MCF 10A (cell line): ENCODE measurements at regions of chr6 and their contacts with region 1.

Region 1: DNA sequence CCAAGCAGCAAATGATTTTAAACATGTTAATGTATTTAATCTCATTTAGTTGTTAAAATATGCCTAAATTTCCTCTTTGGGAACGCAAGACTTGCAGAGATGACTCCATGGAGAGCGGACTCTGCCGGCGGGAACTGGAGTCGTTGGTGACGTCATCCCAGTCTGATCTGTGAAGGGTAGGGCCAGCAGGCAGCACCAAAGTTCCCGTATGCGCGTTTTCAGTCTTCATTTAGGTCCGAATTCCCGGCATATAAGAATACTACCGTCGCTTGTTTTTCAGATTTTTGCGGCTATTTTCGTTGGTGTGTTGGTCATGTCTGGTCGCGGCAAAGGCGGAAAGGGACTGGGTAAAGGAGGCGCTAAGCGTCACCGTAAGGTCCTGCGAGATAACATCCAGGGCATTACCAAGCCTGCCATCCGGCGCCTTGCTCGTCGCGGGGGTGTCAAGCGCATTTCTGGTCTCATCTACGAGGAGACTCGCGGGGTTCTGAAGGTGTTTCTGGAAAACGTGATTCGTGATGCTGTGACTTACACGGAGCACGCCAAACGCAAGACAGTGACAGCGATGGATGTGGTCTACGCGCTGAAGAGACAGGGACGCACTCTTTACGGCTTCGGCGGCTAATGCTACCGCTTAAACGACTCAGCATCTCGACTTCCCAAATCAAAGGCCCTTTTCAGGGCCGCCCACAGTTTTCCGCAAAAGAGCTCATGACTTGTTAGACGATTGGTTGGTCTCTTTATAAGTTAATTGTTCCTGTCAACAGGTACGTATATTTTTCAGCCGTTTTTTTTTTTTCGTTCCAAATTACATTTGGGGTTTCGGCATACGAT is 117.3 kb downstream of the HFE start:
- DNase-seq: peak; percentile 98
- H3K4me3 Mint-ChIP-seq: no peak overlapping the region
- H3K27ac Mint-ChIP-seq: no peak overlapping the region
- H3K4me1 Mint-ChIP-seq: peaks cover 3% of the 10 kb centered on the region
- H3K27me3 Mint-ChIP-seq: no peaks in the 10 kb centered on the region
- CTCF ChIP-seq: no peak

Region 2: GRCh38 chr6:26054857-26055669 is 149.5 kb before region 1 on chr6:
- CTCF ChIA-PET with region 1: no interaction called
- POLR2A ChIA-PET with region 1: interaction called, 70 read pairs
- intact Hi-C with region 1: loop called (anchors 5 kb)
- DNase-seq: peak; percentile 96
- H3K4me3 Mint-ChIP-seq: peak overlapping the region; percentile 74
- H3K27ac Mint-ChIP-seq: peak overlapping the region; percentile 92
- H3K4me1 Mint-ChIP-seq: no peaks in the 10 kb centered on the region
- H3K27me3 Mint-ChIP-seq: no peaks in the 10 kb centered on the region
- CTCF ChIP-seq: no peak

Region 3: DNA sequence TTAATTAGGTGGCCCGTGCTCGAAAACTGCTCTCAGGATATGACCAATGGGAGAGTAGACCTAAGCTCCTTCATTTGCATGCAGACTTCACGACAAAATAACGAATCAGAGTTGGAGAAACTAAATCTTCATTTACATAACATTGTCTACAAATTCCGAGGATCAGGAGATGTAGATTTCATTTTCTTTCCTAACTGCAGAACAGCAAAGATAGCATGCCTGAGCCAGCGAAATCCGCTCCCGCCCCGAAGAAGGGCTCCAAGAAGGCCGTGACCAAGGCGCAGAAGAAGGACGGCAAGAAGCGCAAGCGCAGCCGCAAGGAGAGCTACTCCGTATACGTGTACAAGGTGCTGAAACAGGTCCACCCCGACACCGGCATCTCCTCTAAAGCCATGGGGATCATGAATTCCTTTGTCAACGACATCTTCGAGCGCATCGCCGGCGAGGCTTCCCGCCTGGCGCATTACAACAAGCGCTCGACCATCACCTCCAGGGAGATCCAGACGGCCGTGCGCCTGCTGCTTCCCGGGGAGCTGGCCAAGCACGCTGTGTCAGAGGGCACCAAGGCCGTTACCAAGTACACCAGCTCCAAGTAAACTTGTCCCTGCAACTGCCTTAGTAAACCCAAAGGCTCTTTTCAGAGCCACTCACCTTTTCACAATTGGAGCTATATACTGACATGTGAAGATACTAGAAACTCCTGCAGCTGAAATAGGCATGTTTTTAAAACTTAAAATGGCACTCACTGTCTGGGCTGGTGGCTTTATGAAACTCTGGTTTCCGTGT is 20.8 kb before region 1 on chr6:
- CTCF ChIA-PET with region 1: no interaction called
- POLR2A ChIA-PET with region 1: interaction called, 372 read pairs
- intact Hi-C with region 1: no loop called
- DNase-seq: peak; percentile 56
- H3K4me3 Mint-ChIP-seq: peak overlapping the region; percentile 79
- H3K27ac Mint-ChIP-seq: peak overlapping the region; percentile 84
- H3K4me1 Mint-ChIP-seq: peaks cover 27% of the 10 kb centered on the region
- H3K27me3 Mint-ChIP-seq: no peaks in the 10 kb centered on the region
- CTCF ChIP-seq: no peak

Region 4: GRCh38 chr6:26249957-26250697 is 45.6 kb after region 1 on chr6:
- CTCF ChIA-PET with region 1: interaction called, 3 read pairs
- POLR2A ChIA-PET with region 1: interaction called, 3 read pairs
- intact Hi-C with region 1: loop called (anchors 1 kb)
- DNase-seq: peak; percentile 87
- H3K4me3 Mint-ChIP-seq: peak overlapping the region; percentile 94
- H3K27ac Mint-ChIP-seq: peak overlapping the region; percentile 63
- H3K4me1 Mint-ChIP-seq: peaks cover 7% of the 10 kb centered on the region
- H3K27me3 Mint-ChIP-seq: no peaks in the 10 kb centered on the region
- CTCF ChIP-seq: peak; percentile 42

Region 5: GRCh38 chr6:27825025-27825793 is 1620.7 kb after region 1 on chr6:
- CTCF ChIA-PET with region 1: no interaction called
- POLR2A ChIA-PET with region 1: interaction called, 55 read pairs
- intact Hi-C with region 1: no loop called
- DNase-seq: no peak
- H3K4me3 Mint-ChIP-seq: peak overlapping the region; percentile 94
- H3K27ac Mint-ChIP-seq: peak overlapping the region; percentile 95
- H3K4me1 Mint-ChIP-seq: peaks cover 10% of the 10 kb centered on the region
- H3K27me3 Mint-ChIP-seq: no peaks in the 10 kb centered on the region
- CTCF ChIP-seq: no peak